Activated T-helper 1 cell treated with anti-CD3 and anti-CD28 coated beads, Interleukin-12 subunit alpha, Interleukin-12 subunit beta, Interleukin-2, Interleukin-4 antibody, amounts not matched to agents 30 ng/mL and 10 ng/mL and 1 ng/mL, durations not matched to agents 14 hours and 24 hours and 36 hours (primary cell): ENCODE measurements at regions of chr5 and their contacts with region 1.

Region 1: DNA sequence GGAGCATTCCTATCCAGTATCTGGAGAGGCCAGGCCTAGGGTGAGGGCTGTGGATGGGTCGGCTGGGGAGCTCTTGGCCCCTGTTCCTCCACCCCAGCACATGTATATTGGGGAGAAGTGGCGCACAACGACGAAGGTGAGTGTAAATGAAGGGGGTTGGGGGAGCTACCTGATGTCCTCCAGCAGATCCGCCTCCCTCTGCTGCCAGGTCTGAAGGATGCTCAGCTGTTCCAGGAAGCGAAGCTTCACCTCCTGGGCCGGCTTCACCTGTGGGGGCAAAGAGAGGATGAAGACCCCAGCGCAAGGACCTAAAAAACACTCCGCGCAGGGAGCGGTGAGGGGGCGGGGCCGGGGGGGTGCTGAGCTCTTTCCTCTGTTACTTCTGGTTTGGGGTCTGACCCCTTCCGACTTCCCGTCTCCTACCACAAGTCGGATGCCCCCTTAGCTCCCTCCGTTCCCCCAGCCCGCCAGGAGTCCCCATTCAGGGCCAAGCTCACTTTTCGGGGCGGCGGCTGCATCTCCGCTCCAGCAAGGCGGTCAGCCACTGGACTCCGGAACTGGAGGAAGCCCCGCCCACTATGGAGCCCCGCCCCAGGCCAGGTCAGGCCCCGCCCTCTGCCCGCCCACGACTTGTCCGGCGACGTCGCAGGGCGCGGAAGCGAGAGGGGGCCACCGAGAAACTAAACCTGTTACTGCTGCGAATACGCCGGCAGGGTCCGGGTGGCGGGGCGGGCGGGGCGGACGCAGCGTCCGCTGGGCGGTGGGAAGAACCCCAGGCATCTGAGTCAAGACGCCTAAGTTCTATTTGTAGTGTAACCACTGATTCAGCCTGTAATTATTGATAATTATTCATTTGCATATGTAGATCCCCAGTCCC is at the start of gene FCHSD1:
- DNase-seq: peak; percentile 76
- H3K4me3 Mint-ChIP-seq: peak within 1 kb of the TSS; percentile 98
- H3K27ac Mint-ChIP-seq: peak within 1 kb of the TSS; percentile 92
- H3K4me1 Mint-ChIP-seq: peaks cover 43% of the 10 kb centered on the region
- H3K27me3 Mint-ChIP-seq: no peaks in the 10 kb centered on the region
- total RNA-seq, gene FCHSD1: 37.0 and 37.1 TPM in 2 replicates

Region 2: GRCh38 chr5:141567513-141568117 is 83.5 kb before region 1 on chr5:
- intact Hi-C with region 1: no loop called
- DNase-seq: no peak
- H3K4me3 Mint-ChIP-seq: no peak overlapping the region
- H3K27ac Mint-ChIP-seq: no peak overlapping the region
- H3K4me1 Mint-ChIP-seq: peaks cover 25% of the 10 kb centered on the region
- H3K27me3 Mint-ChIP-seq: no peaks in the 10 kb centered on the region

Region 3: DNA sequence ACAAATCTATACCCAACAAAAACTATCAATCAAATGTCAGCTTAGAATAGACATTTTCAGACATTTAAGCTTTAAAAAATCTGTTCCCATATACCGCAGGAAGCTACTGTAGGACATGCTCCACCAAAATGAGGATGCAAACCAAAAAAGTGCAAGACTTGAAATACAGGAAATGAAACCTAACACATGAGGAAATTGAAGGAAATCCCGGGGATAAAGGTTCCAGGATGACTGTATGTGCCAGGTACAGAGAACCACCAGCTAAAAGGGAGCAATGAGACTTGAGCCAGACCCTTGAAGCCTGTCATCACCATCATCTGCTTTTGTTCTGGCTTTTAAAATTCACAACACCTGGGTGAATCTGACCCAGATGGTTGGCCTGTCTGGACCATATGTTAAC is 53.7 kb before region 1 on chr5:
- intact Hi-C with region 1: loop called (anchors 1 kb)
- DNase-seq: no peak
- H3K4me3 Mint-ChIP-seq: no peak overlapping the region
- H3K27ac Mint-ChIP-seq: peak overlapping the region; percentile 5
- H3K4me1 Mint-ChIP-seq: peaks cover 66% of the 10 kb centered on the region
- H3K27me3 Mint-ChIP-seq: no peaks in the 10 kb centered on the region

Region 4: GRCh38 chr5:141618804-141619554 is 32.1 kb before region 1 on chr5 and contains the start of gene DIAPH1:
- intact Hi-C with region 1: loop called (anchors 1 kb)
- DNase-seq: peak; percentile 96
- H3K4me3 Mint-ChIP-seq: peak within 1 kb of the TSS; percentile 98
- H3K27ac Mint-ChIP-seq: peak within 1 kb of the TSS; percentile 96
- H3K4me1 Mint-ChIP-seq: peaks cover 59% of the 10 kb centered on the region
- H3K27me3 Mint-ChIP-seq: no peaks in the 10 kb centered on the region
- total RNA-seq, gene DIAPH1: 221 and 234 TPM in 2 replicates

Region 5: GRCh38 chr5:141664732-141665461 is 13.8 kb after region 1 on chr5:
- intact Hi-C with region 1: loop called (anchors 1 kb)
- DNase-seq: peak; percentile 59
- H3K4me3 Mint-ChIP-seq: no peak overlapping the region
- H3K27ac Mint-ChIP-seq: no peak overlapping the region
- H3K4me1 Mint-ChIP-seq: no peaks in the 10 kb centered on the region
- H3K27me3 Mint-ChIP-seq: peaks cover 2% of the 10 kb centered on the region

Region 6: GRCh38 chr5:141747152-141748141 is 96.4 kb after region 1 on chr5:
- intact Hi-C with region 1: no loop called
- DNase-seq: no peak
- H3K4me3 Mint-ChIP-seq: no peak overlapping the region
- H3K27ac Mint-ChIP-seq: no peak overlapping the region
- H3K4me1 Mint-ChIP-seq: no peaks in the 10 kb centered on the region
- H3K27me3 Mint-ChIP-seq: peaks cover 26% of the 10 kb centered on the region

Region 7: DNA sequence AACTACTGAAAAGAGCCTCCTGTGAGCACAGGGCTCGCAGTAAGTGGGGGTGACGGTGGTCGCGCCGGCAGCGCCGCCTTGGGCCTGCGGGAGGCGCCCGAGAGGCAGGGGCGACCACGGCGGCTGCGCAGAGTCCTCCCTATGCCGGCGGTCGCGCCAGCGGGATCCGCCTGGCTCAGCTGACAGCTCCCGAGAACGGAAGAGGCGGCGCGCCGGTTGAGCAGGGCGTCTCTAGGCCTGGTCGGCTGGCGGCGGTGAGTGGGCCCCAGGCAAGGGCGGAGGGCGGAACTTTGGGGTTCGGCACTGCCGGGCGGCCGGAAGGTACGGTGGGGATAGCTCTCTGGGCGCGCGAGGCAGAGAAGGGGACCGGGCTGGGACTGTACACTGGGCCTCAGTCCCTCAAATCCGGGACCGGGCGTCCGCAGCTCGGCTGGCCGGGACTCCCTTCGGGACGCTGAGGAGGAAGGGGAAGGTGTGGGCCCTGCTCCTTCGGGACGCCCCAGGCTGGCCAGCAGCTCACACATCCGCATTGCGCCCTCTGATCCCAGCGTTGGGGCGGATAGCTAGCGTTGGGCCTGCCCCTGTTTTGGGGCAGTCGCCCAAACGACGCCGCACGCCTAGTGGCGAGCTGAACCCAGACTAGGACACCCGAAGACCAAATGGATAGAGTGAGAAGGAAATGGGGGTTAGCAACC is 318.0 kb after region 1 on chr5 and contains the start of gene RNF14:
- intact Hi-C with region 1: loop called (anchors 1 kb)
- DNase-seq: peak; percentile 95
- H3K4me3 Mint-ChIP-seq: peak within 1 kb of the TSS; percentile 92
- H3K27ac Mint-ChIP-seq: peak within 1 kb of the TSS; percentile 93
- H3K4me1 Mint-ChIP-seq: peaks cover 26% of the 10 kb centered on the region
- H3K27me3 Mint-ChIP-seq: no peaks in the 10 kb centered on the region
- total RNA-seq, gene RNF14: 26.4 and 28.7 TPM in 2 replicates

Region 8: DNA sequence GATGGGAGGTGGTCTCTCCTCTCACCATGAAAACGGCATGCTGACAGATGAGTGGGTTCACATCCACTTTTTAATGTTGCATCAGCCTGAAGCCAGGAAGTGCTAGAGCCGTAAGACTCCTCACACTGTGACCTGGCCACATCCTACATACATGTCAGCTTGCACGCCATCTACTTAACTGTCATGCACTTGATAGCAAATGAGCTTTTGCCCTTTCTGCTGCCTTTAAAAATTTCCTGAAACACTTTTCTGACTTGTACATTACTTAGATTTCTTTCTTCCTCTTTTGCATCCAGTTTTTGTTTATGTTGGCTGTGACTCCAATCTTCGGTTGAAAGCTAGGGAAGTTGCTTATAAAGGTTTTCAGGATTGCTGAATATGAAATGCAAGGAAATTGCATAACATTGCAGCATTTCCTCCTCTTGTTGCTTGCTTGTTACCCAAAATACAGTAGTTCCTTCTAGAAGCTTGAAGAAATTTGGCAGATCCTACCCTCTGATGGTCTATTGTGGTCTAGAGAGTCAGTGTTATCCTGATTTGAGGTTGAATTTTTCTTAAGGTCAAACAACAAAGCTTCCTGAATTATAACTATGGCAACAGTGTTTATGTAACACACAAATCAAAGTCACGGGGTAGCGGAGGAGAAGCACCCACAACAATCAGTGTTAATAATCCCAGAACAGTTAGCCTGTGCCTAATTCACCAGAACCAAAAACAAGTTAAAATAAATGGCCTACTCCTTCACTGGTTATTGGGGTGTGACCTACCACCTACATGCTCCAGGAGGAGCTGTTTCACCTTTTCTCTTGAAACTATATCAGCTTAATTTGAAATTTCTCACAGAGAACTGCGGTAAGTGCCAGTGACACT is 1351.6 kb after region 1 on chr5:
- intact Hi-C with region 1: no loop called
- DNase-seq: peak; percentile 66
- H3K4me3 Mint-ChIP-seq: peak overlapping the region; percentile 75
- H3K27ac Mint-ChIP-seq: peak overlapping the region; percentile 98
- H3K4me1 Mint-ChIP-seq: peaks cover 89% of the 10 kb centered on the region
- H3K27me3 Mint-ChIP-seq: no peaks in the 10 kb centered on the region